IMR-90 (cell line): ENCODE measurements at regions of chr15 and their contacts with region 1.

Region 1: DNA sequence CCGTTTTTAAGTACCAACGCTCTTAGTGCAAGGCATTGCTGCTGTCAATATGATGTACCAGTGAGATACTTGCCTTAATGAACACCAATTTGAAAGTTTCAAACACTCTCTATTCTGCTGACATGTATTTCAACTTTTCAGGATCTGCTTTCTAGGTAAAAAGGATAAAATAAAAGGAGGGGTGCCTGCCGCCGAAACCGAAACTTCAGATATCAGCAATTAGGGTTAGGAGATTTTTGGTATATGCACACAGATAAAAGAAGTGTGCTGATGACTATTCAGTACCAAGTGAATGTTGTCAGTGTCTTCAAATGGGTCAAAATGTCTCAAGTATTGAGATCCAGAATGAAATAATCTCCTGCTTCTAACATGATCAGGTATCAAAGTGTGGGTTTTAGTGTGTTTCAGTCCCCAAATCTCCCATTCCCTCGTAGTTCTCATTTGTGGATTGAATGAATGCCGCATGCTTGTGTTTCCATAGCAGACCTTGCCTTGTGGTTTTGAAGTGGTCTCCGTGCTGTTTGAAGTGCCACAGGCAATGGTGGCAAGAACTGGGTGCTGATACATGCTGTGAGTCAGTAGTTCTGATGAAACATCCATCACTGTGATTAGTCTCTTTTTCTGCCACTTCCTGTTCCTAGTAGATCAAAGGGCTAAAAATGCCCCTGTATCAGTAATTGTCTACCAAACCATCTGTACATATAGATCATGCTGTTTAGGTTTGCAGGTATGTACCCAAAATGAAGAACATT is 22.5 kb downstream of the CHST14 start:
- DNase-seq: no peak
- ATAC-seq: no peak
- H3K4me3 ChIP-seq: no peak overlapping the region
- H3K27ac ChIP-seq: no peak overlapping the region
- H3K4me1 ChIP-seq: no peaks in the 10 kb centered on the region
- H3K27me3 ChIP-seq: peaks cover 51% of the 10 kb centered on the region
- CTCF ChIP-seq: no peak
- POLR2A ChIP-seq: no peak
- RAD21 ChIP-seq: no peak

Region 2: GRCh38 chr15:40543631-40544294 is 50.5 kb after region 1 on chr15:
- CTCF ChIA-PET with region 1: no interaction called
- POLR2A ChIA-PET with region 1: no interaction called
- dilution Hi-C with region 1: no loop called
- in situ Hi-C with region 1: no loop called
- intact Hi-C with region 1: loop called (anchors 1 kb)
- DNase-seq: no peak
- ATAC-seq: peak; percentile 57
- H3K4me3 ChIP-seq: no peak overlapping the region
- H3K27ac ChIP-seq: no peak overlapping the region
- H3K4me1 ChIP-seq: no peaks in the 10 kb centered on the region
- H3K27me3 ChIP-seq: no peaks in the 10 kb centered on the region
- CTCF ChIP-seq: no peak
- POLR2A ChIP-seq: no peak
- RAD21 ChIP-seq: no peak

Region 3: DNA sequence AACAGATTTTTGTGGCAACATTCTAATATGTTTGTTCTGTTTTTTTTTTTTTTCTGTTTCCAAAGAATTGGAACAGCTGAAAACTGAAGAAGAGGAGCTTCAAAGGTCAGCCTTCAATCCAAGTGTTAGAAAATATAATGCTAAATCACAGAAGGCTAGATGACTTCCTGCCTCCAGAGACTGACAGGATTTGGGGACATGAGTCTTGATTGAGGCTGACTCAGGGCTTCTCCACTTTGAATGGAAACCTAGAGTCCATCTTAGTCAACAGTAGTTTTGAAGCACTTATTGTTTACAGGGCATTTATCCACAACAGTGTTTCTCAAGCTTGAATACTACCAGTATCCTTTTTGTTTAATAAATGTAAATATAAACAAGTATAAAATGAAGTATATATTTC is 157.2 kb after region 1 on chr15:
- CTCF ChIA-PET with region 1: no interaction called
- POLR2A ChIA-PET with region 1: no interaction called
- dilution Hi-C with region 1: no loop called
- in situ Hi-C with region 1: no loop called
- intact Hi-C with region 1: no loop called
- DNase-seq: no peak
- ATAC-seq: no peak
- H3K4me3 ChIP-seq: no peak overlapping the region
- H3K27ac ChIP-seq: no peak overlapping the region
- H3K4me1 ChIP-seq: no peaks in the 10 kb centered on the region
- H3K27me3 ChIP-seq: no peaks in the 10 kb centered on the region
- CTCF ChIP-seq: no peak
- POLR2A ChIP-seq: no peak
- RAD21 ChIP-seq: no peak

Region 4: GRCh38 chr15:40702077-40702476 is 208.8 kb after region 1 on chr15:
- CTCF ChIA-PET with region 1: interaction called, 11 read pairs
- POLR2A ChIA-PET with region 1: no interaction called
- dilution Hi-C with region 1: no loop called
- in situ Hi-C with region 1: no loop called
- intact Hi-C with region 1: no loop called
- DNase-seq: peak; percentile 28
- ATAC-seq: no peak
- H3K4me3 ChIP-seq: no peak overlapping the region
- H3K27ac ChIP-seq: no peak overlapping the region
- H3K4me1 ChIP-seq: no peaks in the 10 kb centered on the region
- H3K27me3 ChIP-seq: no peaks in the 10 kb centered on the region
- CTCF ChIP-seq: peak; percentile 34
- POLR2A ChIP-seq: no peak
- RAD21 ChIP-seq: peak; percentile 46